ENCODE measurements at regions of chrX and their contacts with region 1.

Region 1: GRCh38 chrX:40543661-40544328 is 37.0 kb upstream of the ATP6AP2 start:
- DNase-seq: peak in 1 of 2 experiments; percentile 31
- ATAC-seq: peak in 1 of 2 experiments; percentile 60; a peak in 3 of 6 replicates
- H3K4me3 ChIP-seq: no peak overlapping the region
- H3K27ac ChIP-seq: no peak overlapping the region; a peak in 1 of 6 replicates
- H3K4me1 ChIP-seq: peaks cover 6% of the 10 kb centered on the region; the same call in 2 of the 3 replicates
- CTCF ChIP-seq: peak; percentile 75
- EP300 ChIP-seq: no peak
- POLR2A ChIP-seq: no peak
- RAD21 ChIP-seq: peak; percentile 74 to 75

Region 2: GRCh38 chrX:40380655-40381488 is 162.9 kb before region 1 on chrX:
- CTCF ChIA-PET with region 1: no interaction called
- POLR2A ChIA-PET with region 1: no interaction called
- DNase-seq: no peak
- ATAC-seq: no peak
- H3K4me3 ChIP-seq: no peak overlapping the region
- H3K27ac ChIP-seq: no peak overlapping the region
- H3K4me1 ChIP-seq: no peaks in the 10 kb centered on the region
- CTCF ChIP-seq: no peak
- EP300 ChIP-seq: no peak
- POLR2A ChIP-seq: no peak
- RAD21 ChIP-seq: no peak

Region 3: GRCh38 chrX:40524423-40524822 is 19.4 kb before region 1 on chrX:
- CTCF ChIA-PET with region 1: interaction called, 10 read pairs
- POLR2A ChIA-PET with region 1: no interaction called
- DNase-seq: no peak
- ATAC-seq: no peak
- H3K4me3 ChIP-seq: no peak overlapping the region
- H3K27ac ChIP-seq: no peak overlapping the region
- H3K4me1 ChIP-seq: no peaks in the 10 kb centered on the region
- CTCF ChIP-seq: no peak
- EP300 ChIP-seq: no peak
- POLR2A ChIP-seq: no peak
- RAD21 ChIP-seq: peak in 1 of 2 experiments; percentile 24; a peak in 1 of 5 replicates

Region 4: DNA sequence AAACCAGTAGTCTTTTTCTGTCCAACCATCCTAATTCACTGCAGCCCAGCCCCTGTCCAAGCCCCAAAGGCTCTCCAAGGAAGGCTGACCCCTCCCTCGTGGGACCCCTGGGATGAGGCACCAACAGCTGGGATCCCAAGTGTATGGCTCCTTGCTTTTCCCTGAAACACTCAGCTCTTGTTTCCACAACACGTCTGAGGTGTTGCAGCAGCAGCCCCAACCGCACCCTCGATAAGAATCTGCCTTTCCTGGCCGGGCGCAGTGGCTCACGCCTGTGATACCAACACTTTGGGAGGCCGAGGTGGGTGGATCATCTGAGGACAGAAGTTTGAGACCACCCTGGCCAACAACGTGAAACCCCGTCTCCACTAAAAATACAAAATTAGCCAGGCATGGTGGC is 20.0 kb after region 1 on chrX:
- CTCF ChIA-PET with region 1: interaction called, 18 read pairs
- POLR2A ChIA-PET with region 1: no interaction called
- DNase-seq: no peak
- ATAC-seq: no peak
- H3K4me3 ChIP-seq: no peak overlapping the region
- H3K27ac ChIP-seq: no peak overlapping the region
- H3K4me1 ChIP-seq: no peaks in the 10 kb centered on the region
- CTCF ChIP-seq: no peak
- EP300 ChIP-seq: no peak
- POLR2A ChIP-seq: no peak
- RAD21 ChIP-seq: no peak